Heart right ventricle (tissue), 16 donors: ENCODE measurements at regions of chr10 and their contacts with region 1.

Region 1: DNA sequence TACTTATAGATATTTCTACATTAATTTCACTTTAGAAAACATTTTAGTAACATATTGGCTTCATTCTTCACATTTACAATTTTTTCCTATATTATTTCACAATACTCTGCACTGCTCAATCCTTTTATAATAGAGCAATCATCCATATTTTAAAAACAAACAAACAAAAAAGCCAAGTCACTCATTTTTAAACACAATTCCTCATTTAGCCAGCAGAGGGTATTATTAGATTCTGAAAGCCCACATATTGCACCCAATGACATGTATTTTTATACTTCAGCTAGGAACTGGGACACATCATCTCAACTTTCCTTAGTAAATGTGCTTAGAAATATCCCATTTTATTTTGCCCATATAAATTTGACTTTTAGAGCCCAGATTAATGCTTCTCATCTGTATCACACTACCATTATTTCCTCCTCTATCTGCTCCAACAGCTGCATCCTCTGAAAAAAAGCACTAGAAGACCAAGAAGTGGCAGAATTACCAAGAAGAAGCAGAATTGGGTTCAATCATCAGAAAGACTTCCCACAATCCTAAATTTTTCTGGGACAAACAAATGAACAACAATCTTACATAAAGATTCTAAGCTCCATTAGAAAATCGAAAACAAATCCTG is 29.5 kb downstream of the CTNNA3 start:
- DNase-seq: no peak
- ATAC-seq: peak in 5 of 8 donors; percentile 53 to 79 (median 62)
- H3K4me3 ChIP-seq: no peak overlapping the region
- H3K27ac ChIP-seq: peak overlapping the region in 7 of 10 donors; percentile 6 to 67 (median 27)
- H3K4me1 ChIP-seq: peaks cover 0 to 59% (median 12%) of the 10 kb centered on the region in 9 donors
- H3K27me3 ChIP-seq: no peaks in the 10 kb centered on the region
- CTCF ChIP-seq: peak in 8 of 9 donors; percentile 39 to 65 (median 56)

Region 2: GRCh38 chr10:67697724-67698131 is 31.2 kb after region 1 on chr10:
- intact Hi-C with region 1: loop called in 2 of 10 experiments (anchors 1 to 2 kb)
- DNase-seq: peak in 1 of 2 donors; percentile 10
- ATAC-seq: peak in 6 of 8 donors; percentile 25 to 76 (median 54)
- H3K4me3 ChIP-seq: no peak overlapping the region
- H3K27ac ChIP-seq: peak overlapping the region in 4 of 10 donors; percentile 79 to 93 (median 88)
- H3K4me1 ChIP-seq: peaks cover 0 to 28% (median 10%) of the 10 kb centered on the region in 9 donors
- H3K27me3 ChIP-seq: peaks cover 0 to 19% (median 0%) of the 10 kb centered on the region in 7 donors
- CTCF ChIP-seq: peak; percentile 40 to 79 (median 71)

Region 3: DNA sequence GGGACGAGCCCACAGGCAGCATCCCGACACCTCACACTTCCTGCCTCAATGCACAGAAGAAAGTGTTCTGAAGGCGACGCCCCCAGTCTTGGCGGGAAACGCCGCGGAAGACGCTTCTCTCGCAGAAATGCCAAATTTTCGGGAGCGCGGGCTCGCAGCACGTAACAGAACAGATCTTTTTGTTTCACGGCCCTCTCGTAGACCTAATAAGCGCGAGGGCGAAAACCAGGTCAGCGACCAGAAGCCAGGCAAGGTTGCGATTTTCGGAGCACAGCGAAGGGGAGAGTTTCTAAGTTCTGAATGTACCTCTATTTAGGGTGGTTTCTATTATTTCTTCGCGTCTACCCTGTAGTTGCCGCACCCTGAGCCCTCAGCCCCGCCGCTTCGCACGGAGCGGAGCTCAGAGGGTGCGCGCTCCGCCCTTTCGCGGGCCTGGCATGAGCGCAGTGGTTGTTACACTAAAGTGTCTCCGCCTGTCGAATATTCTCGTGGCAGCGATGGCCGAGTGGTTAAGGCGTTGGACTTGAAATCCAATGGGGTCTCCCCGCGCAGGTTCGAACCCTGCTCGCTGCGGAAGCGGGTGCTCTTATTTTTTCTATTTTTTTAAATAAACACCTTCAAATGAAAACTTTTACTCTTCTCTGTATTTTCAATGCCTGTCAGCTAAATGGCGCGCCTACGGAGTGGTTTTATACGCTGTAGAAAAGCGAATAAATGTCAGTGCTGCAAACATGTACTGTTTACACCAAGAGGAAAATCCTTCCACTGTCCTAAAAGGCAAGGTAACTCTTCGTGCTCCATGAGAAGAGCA is 97.7 kb after region 1 on chr10:
- intact Hi-C with region 1: loop called in 1 of 10 experiments (anchors 10 kb)
- DNase-seq: peak; percentile 91 to 94
- ATAC-seq: peak; percentile 95 to 97 (median 96)
- H3K4me3 ChIP-seq: peak overlapping the region; percentile 55 to 95 (median 68)
- H3K27ac ChIP-seq: peak overlapping the region; percentile 77 to 98 (median 92)
- H3K4me1 ChIP-seq: peaks cover 0 to 15% (median 0%) of the 10 kb centered on the region in 9 donors
- H3K27me3 ChIP-seq: no peaks in the 10 kb centered on the region
- CTCF ChIP-seq: no peak

Region 4: GRCh38 chr10:67779465-67780203 is 113.1 kb after region 1 on chr10:
- intact Hi-C with region 1: loop called in 7 of 10 experiments (anchors 1 to 10 kb)
- DNase-seq: peak in 1 of 2 donors; percentile 78
- ATAC-seq: peak; percentile 72 to 94 (median 86)
- H3K4me3 ChIP-seq: no peak overlapping the region
- H3K27ac ChIP-seq: no peak overlapping the region
- H3K4me1 ChIP-seq: peaks cover 0 to 18% (median 2%) of the 10 kb centered on the region in 9 donors
- H3K27me3 ChIP-seq: no peaks in the 10 kb centered on the region
- CTCF ChIP-seq: peak; percentile 76 to 90 (median 85)

Region 5: GRCh38 chr10:67884313-67884841 is 217.9 kb after region 1 on chr10 and contains the start of gene SIRT1:
- intact Hi-C with region 1: no loop called
- DNase-seq: peak; percentile 96 to 98
- ATAC-seq: peak; percentile 93 to 98 (median 97)
- H3K4me3 ChIP-seq: peak within 1 kb of the TSS; percentile 68 to 92 (median 80)
- H3K27ac ChIP-seq: peak within 1 kb of the TSS; percentile 84 to 99 (median 94)
- H3K4me1 ChIP-seq: peaks cover 0 to 42% (median 23%) of the 10 kb centered on the region in 9 donors
- H3K27me3 ChIP-seq: no peaks in the 10 kb centered on the region
- CTCF ChIP-seq: peak in 2 of 9 donors; percentile 4 to 22
- total RNA-seq, gene SIRT1: 9.9 to 18.0 (median 14.0) TPM